A549 (cell line): ENCODE measurements at regions of chr2 and their contacts with region 1.

Region 1: DNA sequence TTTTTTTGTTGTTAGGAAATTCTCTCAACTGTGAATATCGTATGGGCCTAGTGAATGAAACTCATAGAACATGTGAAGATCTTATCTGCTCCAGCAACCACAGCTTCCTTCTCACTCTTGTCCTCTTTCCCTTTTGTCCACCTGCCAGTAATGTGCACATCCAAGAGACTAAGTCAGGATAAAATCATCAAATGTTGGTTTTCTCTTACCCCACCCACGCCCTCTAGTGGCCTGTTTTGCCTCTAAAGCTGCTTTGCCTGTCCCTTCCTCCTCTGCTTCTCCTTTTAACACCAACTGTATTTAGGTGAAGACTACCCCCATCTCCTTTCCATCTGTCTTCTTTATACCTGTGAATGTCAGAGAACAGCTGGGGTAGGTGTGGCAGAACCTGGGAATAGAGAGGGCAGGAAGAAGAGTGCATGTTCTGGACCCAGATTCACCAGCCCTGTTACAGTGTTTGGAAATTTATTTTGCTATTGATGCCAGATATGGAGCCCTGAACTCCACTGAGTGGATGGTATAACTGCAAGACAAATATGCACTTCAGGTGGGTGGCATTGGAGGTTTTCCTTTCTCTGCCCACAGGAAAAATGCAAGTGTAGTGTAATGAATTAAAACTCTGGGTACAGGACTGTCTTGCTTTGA is 8.4 kb upstream of the MGAT5 start:
- DNase-seq: peak; percentile 12 to 62
- ATAC-seq: peak; percentile 86 to 91
- H3K4me3 ChIP-seq: no peak overlapping the region
- H3K27ac ChIP-seq: no peak overlapping the region
- H3K4me1 ChIP-seq: no peaks in the 10 kb centered on the region
- CTCF ChIP-seq: peak; percentile 83
- EP300 ChIP-seq: no peak
- POLR2A ChIP-seq: no peak
- RAD21 ChIP-seq: peak; percentile 65 to 71

Region 2: GRCh38 chr2:134232868-134233727 is 12.4 kb before region 1 on chr2:
- CTCF ChIA-PET with region 1: interaction called, 19 read pairs
- POLR2A ChIA-PET with region 1: no interaction called
- DNase-seq: no peak
- ATAC-seq: no peak
- H3K4me3 ChIP-seq: no peak overlapping the region
- H3K27ac ChIP-seq: no peak overlapping the region
- H3K4me1 ChIP-seq: no peaks in the 10 kb centered on the region
- CTCF ChIP-seq: no peak
- EP300 ChIP-seq: no peak
- POLR2A ChIP-seq: no peak
- RAD21 ChIP-seq: no peak

Region 3: DNA sequence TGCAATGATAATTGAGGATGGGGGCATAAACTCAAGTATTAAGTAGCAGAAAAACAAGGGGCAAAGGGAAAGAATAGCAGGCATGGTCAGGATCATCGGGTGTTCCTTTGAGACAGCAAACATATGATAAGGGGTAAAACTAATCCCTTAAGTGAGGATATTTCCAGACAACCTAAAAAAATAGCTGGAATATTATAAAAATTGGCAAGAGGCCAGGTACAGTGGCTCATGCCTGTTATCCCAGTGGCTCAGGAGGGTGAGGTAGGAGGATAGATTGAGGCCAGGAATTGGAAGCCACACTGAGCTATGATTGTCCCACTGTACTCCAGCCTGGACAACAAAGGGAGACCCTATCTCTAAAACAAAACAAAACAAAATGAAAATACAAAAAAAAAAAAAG is 1146.5 kb after region 1 on chr2:
- CTCF ChIA-PET with region 1: no interaction called
- POLR2A ChIA-PET with region 1: no interaction called
- DNase-seq: no peak
- ATAC-seq: no peak
- H3K4me3 ChIP-seq: no peak overlapping the region
- H3K27ac ChIP-seq: no peak overlapping the region
- H3K4me1 ChIP-seq: no peaks in the 10 kb centered on the region
- CTCF ChIP-seq: no peak
- EP300 ChIP-seq: no peak
- POLR2A ChIP-seq: no peak
- RAD21 ChIP-seq: no peak